Activated B cell treated with CpG ODN at 0.5 μM for 24 hours (primary cell): ENCODE measurements at regions of chrX and their contacts with region 1.

Region 1: GRCh38 chrX:132292793-132293192 is 73.5 kb upstream of the RAP2C start:
- DNase-seq: no peak
- ATAC-seq: peak; percentile 42
- H3K4me3 Mint-ChIP-seq: no peak overlapping the region
- H3K27ac Mint-ChIP-seq: no peak overlapping the region
- H3K4me1 Mint-ChIP-seq: no peaks in the 10 kb centered on the region
- H3K27me3 Mint-ChIP-seq: no peaks in the 10 kb centered on the region
- CTCF ChIP-seq: no peak

Region 2: DNA sequence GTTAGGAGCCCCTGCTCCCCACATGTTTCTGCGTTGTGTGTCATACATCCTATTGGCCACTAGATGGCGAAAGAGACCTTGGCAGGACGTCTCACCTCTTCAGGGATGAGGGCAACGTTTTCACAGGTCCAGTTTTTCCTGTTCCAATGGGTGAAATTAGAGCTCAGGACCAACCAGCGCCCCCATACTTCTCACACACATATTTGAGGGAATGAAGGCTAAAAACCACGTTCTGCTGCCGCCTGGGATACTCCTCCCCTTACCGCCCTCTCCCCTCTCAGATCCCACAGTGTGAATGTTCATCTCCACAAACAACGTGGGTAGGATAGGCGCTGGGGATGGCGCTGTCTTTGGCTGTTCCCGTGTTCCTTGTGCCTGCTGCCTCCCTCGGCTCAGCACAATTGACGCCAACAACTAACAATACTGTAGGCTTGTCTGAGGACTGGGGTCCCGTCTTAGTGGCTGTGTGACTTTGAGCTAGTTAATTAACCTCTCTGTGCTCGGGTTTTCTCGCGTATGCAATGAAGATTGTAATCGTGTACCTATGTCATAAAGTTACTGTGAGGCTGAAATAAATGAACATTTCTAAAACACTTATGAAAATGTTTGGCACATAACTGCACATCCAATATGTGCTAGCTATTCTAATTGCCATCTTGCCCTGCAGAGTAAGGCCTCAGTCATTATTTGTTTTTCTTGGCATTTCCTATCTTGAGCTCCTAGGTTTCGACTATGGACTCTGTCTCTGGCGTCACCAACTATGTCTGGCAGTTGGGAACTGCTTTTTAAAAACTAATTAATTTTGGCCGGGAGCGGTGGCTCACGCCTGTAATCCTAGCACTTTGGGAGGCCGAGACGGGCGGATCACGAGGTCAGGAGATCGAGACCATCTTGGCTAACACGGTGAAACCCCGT is 451.0 kb before region 1 on chrX:
- CTCF ChIA-PET with region 1: interaction called, 4 read pairs
- POLR2A ChIA-PET with region 1: no interaction called
- intact Hi-C with region 1: loop called (anchors 2 kb)
- DNase-seq: no peak
- ATAC-seq: peak; percentile 70
- H3K4me3 Mint-ChIP-seq: no peak overlapping the region
- H3K27ac Mint-ChIP-seq: no peak overlapping the region
- H3K4me1 Mint-ChIP-seq: peaks cover 3% of the 10 kb centered on the region
- H3K27me3 Mint-ChIP-seq: no peaks in the 10 kb centered on the region
- CTCF ChIP-seq: no peak

Region 3: GRCh38 chrX:132226169-132226568 is 66.6 kb before region 1 on chrX:
- CTCF ChIA-PET with region 1: interaction called, 5 read pairs
- POLR2A ChIA-PET with region 1: no interaction called
- intact Hi-C with region 1: loop called (anchors 2 kb)
- DNase-seq: no peak
- ATAC-seq: no peak
- H3K4me3 Mint-ChIP-seq: no peak overlapping the region
- H3K27ac Mint-ChIP-seq: no peak overlapping the region
- H3K4me1 Mint-ChIP-seq: peaks cover under 1% of the 10 kb centered on the region
- H3K27me3 Mint-ChIP-seq: no peaks in the 10 kb centered on the region
- CTCF ChIP-seq: no peak

Region 4: DNA sequence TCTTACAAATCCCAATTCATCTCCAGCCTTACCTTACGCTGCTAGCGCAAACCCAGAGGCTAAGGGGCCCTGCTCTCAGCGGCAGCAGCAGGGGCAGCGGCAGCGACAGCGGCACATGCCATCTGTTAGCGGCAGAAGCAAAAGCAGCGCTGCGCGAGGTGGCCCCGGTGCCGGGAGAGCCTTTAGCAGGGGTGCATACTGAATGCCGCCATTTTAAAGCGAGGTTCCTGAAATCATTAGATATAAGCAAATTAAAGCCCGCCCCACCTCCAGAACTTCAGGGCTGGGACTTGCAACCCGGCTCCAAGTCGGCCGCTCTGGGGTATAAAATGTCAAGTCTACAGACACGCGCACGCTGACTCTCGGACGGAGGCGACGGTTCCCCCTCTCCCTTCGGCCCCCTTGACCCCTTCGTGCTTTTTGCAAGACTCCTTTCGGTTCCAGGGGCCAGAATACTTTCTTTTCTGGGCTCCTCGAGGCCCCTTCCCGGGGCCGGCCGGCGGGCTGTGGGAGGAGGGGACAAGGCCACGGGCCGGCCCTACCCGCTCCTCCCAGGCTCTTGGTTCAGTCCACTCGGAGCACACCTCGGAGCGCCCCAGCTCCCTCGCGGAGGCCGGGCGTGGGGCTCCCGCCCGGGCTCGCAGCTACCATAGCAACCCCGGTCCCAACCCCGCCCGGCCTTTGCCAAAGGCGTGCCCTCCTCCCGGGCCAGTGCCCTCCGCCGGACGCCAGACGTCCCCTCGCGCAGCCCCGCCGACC is 196.2 kb after region 1 on chrX and contains the start of gene MBNL3:
- CTCF ChIA-PET with region 1: interaction called, 3 read pairs
- POLR2A ChIA-PET with region 1: no interaction called
- intact Hi-C with region 1: loop called (anchors 2 kb)
- DNase-seq: peak; percentile 61
- ATAC-seq: peak; percentile 63
- H3K4me3 Mint-ChIP-seq: peak within 1 kb of the TSS; percentile 98
- H3K27ac Mint-ChIP-seq: peak within 1 kb of the TSS; percentile 99
- H3K4me1 Mint-ChIP-seq: peaks cover 60% of the 10 kb centered on the region
- H3K27me3 Mint-ChIP-seq: no peaks in the 10 kb centered on the region
- CTCF ChIP-seq: no peak
- total RNA-seq, gene MBNL3: 41.0 and 47.0 TPM in 2 replicates

Region 5: GRCh38 chrX:132592880-132593279 is 300.1 kb after region 1 on chrX:
- CTCF ChIA-PET with region 1: interaction called, 9 read pairs
- POLR2A ChIA-PET with region 1: interaction called, 3 read pairs
- intact Hi-C with region 1: loop called (anchors 1 kb)
- DNase-seq: no peak
- ATAC-seq: no peak
- H3K4me3 Mint-ChIP-seq: no peak overlapping the region
- H3K27ac Mint-ChIP-seq: no peak overlapping the region
- H3K4me1 Mint-ChIP-seq: no peaks in the 10 kb centered on the region
- H3K27me3 Mint-ChIP-seq: no peaks in the 10 kb centered on the region
- CTCF ChIP-seq: no peak